ENCODE measurements at regions of chr5 and their contacts with region 1.

Region 1: GRCh38 chr5:172006321-172007174 is at the start of gene FBXW11:
- DNase-seq: peak; percentile 99
- H3K4me3 Mint-ChIP-seq: peak within 1 kb of the TSS; percentile 90
- H3K27ac Mint-ChIP-seq: peak within 1 kb of the TSS; percentile 95
- H3K4me1 Mint-ChIP-seq: peaks cover 51% of the 10 kb centered on the region
- H3K27me3 Mint-ChIP-seq: no peaks in the 10 kb centered on the region
- CTCF ChIP-seq: no peak
- total RNA-seq, gene FBXW11: 64.7 and 82.7 TPM in 2 replicates

Region 2: GRCh38 chr5:171418316-171418981 is 588.1 kb before region 1 on chr5:
- CTCF ChIA-PET with region 1: interaction called, 7 read pairs
- POLR2A ChIA-PET with region 1: interaction called, 4 read pairs
- intact Hi-C with region 1: loop called (anchors 10 kb)
- DNase-seq: peak; percentile 87
- H3K4me3 Mint-ChIP-seq: peak overlapping the region; percentile 68
- H3K27ac Mint-ChIP-seq: no peak overlapping the region
- H3K4me1 Mint-ChIP-seq: peaks cover 34% of the 10 kb centered on the region
- H3K27me3 Mint-ChIP-seq: no peaks in the 10 kb centered on the region
- CTCF ChIP-seq: peak; percentile 99

Region 3: GRCh38 chr5:171835077-171835476 is 171.5 kb before region 1 on chr5:
- CTCF ChIA-PET with region 1: no interaction called
- POLR2A ChIA-PET with region 1: no interaction called
- intact Hi-C with region 1: no loop called
- DNase-seq: peak; percentile 50
- H3K4me3 Mint-ChIP-seq: no peak overlapping the region
- H3K27ac Mint-ChIP-seq: no peak overlapping the region
- H3K4me1 Mint-ChIP-seq: no peaks in the 10 kb centered on the region
- H3K27me3 Mint-ChIP-seq: no peaks in the 10 kb centered on the region
- CTCF ChIP-seq: no peak

Region 4: GRCh38 chr5:171946000-171946774 is 60.4 kb before region 1 on chr5:
- CTCF ChIA-PET with region 1: no interaction called
- POLR2A ChIA-PET with region 1: interaction called, 49 read pairs
- intact Hi-C with region 1: no loop called
- DNase-seq: no peak
- H3K4me3 Mint-ChIP-seq: no peak overlapping the region
- H3K27ac Mint-ChIP-seq: no peak overlapping the region
- H3K4me1 Mint-ChIP-seq: peaks cover 27% of the 10 kb centered on the region
- H3K27me3 Mint-ChIP-seq: no peaks in the 10 kb centered on the region
- CTCF ChIP-seq: no peak

Region 5: GRCh38 chr5:171989946-171990712 is 16.4 kb before region 1 on chr5:
- CTCF ChIA-PET with region 1: interaction called, 6 read pairs
- POLR2A ChIA-PET with region 1: interaction called, 55 read pairs
- intact Hi-C with region 1: no loop called
- DNase-seq: peak; percentile 69
- H3K4me3 Mint-ChIP-seq: no peak overlapping the region
- H3K27ac Mint-ChIP-seq: peak overlapping the region; percentile 65
- H3K4me1 Mint-ChIP-seq: peaks cover 13% of the 10 kb centered on the region
- H3K27me3 Mint-ChIP-seq: no peaks in the 10 kb centered on the region
- CTCF ChIP-seq: no peak

Region 6: GRCh38 chr5:172059661-172060100 is 53.1 kb after region 1 on chr5:
- CTCF ChIA-PET with region 1: interaction called, 22 read pairs
- POLR2A ChIA-PET with region 1: interaction called, 4 read pairs
- intact Hi-C with region 1: no loop called
- DNase-seq: peak; percentile 30
- H3K4me3 Mint-ChIP-seq: no peak overlapping the region
- H3K27ac Mint-ChIP-seq: no peak overlapping the region
- H3K4me1 Mint-ChIP-seq: no peaks in the 10 kb centered on the region
- H3K27me3 Mint-ChIP-seq: no peaks in the 10 kb centered on the region
- CTCF ChIP-seq: peak; percentile 64